Left lung (tissue), 14 donors: ENCODE measurements at regions of chr20 and their contacts with region 1.

Region 1: GRCh38 chr20:32902456-32903420 is 44.0 kb downstream of the EFCAB8 start:
- DNase-seq: peak; percentile 5 to 84 (median 34)
- ATAC-seq: peak; percentile 96
- H3K4me3 ChIP-seq: no peak overlapping the region
- H3K27ac ChIP-seq: no peak overlapping the region
- H3K4me1 ChIP-seq: no peaks in the 10 kb centered on the region
- H3K27me3 ChIP-seq: no peaks in the 10 kb centered on the region
- CTCF ChIP-seq: peak; percentile 93

Region 2: DNA sequence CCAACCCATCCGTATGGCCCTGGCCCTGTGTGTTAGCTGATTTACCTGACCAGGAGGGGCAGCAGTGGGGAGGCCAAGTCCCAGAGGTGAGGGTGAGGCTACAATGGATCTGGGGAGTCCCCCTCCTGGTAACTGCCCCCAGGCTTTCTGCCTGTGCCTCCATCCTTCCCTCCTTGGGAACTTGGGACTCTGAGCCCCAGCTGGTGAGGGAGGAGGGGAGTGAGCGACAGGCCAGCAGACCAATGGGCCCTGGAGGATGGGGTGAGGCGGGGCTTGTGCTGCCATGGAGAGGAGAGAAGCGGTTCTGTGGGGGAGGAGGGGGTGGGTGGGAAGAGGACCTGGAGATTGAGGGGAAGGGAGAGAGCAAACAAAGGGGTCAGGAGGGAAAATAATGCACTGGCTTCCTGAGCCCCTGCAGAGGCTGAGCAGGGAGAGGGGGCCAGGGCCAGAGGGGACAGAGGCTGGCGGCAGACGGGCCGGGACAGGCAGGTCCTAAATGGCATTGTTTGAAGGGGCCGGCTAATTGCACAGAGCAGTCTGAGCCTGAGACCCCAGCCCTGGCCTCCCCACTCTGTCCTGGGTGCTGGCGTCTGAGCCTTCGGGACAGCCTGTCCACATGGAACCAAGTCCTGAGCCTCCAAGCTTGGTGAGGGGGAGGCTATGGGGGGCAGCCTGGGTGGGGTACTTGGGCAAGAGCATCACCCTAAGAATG is 123.1 kb before region 1 on chr20:
- intact Hi-C with region 1: no loop called
- DNase-seq: no peak
- ATAC-seq: no peak
- H3K4me3 ChIP-seq: no peak overlapping the region
- H3K27ac ChIP-seq: no peak overlapping the region
- H3K4me1 ChIP-seq: peaks cover 0 to 6% of the 10 kb centered on the region in 2 donors
- H3K27me3 ChIP-seq: no peaks in the 10 kb centered on the region
- CTCF ChIP-seq: no peak

Region 3: DNA sequence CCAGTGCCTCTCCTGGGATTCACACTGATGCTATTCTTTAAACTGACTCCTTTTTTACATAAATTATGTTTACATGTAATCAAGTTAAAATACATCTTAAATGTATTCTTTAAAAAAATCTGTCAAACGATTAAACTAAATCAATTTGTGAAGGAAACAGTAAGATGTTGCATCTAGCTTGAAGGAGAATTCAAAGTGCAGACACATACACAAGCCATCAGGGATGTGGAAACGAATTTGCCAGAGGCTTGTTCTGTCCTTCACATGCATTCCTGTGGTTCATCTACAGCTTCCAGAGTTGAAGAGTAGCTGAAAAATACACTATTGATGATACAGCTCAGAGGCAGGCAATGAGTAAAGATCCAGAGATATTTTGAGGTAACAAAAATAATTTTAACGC is 143.7 kb after region 1 on chr20:
- intact Hi-C with region 1: no loop called
- DNase-seq: no peak
- ATAC-seq: no peak
- H3K4me3 ChIP-seq: no peak overlapping the region
- H3K27ac ChIP-seq: no peak overlapping the region
- H3K4me1 ChIP-seq: no peaks in the 10 kb centered on the region
- H3K27me3 ChIP-seq: no peaks in the 10 kb centered on the region
- CTCF ChIP-seq: no peak

Region 4: GRCh38 chr20:33299111-33299603 is 396.4 kb after region 1 on chr20:
- intact Hi-C with region 1: loop called in 1 of 2 experiments (anchors 10 kb)
- DNase-seq: peak; percentile 15 to 92 (median 54)
- ATAC-seq: peak; percentile 93
- H3K4me3 ChIP-seq: no peak overlapping the region
- H3K27ac ChIP-seq: no peak overlapping the region
- H3K4me1 ChIP-seq: peaks cover 0 to 6% of the 10 kb centered on the region in 2 donors
- H3K27me3 ChIP-seq: peaks cover 0 to 18% of the 10 kb centered on the region in 2 donors
- CTCF ChIP-seq: peak; percentile 79 to 83